MCF 10A (cell line): ENCODE measurements at regions of chr6 and their contacts with region 1.

Region 1: DNA sequence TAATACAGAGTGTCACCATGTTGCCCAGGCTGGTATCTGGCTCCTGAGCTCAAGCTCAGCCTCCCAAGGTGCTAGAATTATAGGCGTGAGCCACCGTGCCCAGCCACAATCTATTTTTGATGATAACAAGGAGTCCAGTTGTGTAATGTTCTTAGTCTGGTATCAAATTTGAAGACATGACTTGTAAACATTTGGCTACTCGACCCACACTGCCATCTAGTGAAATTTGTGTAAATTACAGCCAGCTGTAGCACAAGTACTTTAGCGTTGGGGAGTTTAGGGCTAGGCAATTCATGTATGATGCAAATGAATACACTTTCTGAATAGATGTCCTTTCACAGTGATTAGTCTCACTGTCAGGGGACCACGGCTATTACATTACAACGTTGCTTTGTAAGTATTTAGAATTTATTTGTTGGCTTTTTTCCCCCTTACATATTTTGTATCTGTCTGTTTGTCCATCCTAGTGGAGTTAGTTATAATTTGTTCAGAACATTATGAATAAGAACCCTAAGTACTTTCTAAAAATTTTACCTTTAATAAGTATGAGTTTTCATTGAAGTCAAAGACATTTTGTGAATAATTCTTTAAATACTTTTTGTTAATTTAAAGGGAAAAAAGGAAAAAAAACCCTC is 139.7 kb downstream of the PRDM13 start:
- DNase-seq: peak; percentile 73
- H3K4me3 Mint-ChIP-seq: no peak overlapping the region
- H3K27ac Mint-ChIP-seq: no peak overlapping the region
- H3K4me1 Mint-ChIP-seq: no peaks in the 10 kb centered on the region
- H3K27me3 Mint-ChIP-seq: peaks cover 75% of the 10 kb centered on the region
- CTCF ChIP-seq: peak; percentile 80

Region 2: DNA sequence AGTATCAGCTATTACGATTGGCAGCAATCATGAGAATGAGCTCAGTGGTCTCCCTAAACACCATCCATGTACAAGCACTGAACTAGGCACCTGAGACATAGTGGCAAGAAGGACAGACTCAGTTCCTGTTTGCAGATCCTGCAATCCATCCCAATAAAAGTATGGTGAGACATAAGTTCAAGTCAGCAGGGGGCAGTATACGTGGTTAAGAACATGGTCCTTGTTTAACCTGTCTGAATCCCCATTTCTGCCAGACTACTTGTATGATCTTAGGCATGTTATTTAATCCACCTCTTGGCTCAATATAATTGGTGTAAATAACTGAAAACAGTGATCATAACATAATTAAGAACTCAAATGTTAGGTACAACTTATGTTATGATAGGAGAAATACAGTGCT is 288.1 kb before region 1 on chr6:
- CTCF ChIA-PET with region 1: interaction called, 10 read pairs
- POLR2A ChIA-PET with region 1: interaction called, 3 read pairs
- intact Hi-C with region 1: no loop called
- DNase-seq: peak; percentile 38
- H3K4me3 Mint-ChIP-seq: no peak overlapping the region
- H3K27ac Mint-ChIP-seq: no peak overlapping the region
- H3K4me1 Mint-ChIP-seq: no peaks in the 10 kb centered on the region
- H3K27me3 Mint-ChIP-seq: no peaks in the 10 kb centered on the region
- CTCF ChIP-seq: no peak

Region 3: DNA sequence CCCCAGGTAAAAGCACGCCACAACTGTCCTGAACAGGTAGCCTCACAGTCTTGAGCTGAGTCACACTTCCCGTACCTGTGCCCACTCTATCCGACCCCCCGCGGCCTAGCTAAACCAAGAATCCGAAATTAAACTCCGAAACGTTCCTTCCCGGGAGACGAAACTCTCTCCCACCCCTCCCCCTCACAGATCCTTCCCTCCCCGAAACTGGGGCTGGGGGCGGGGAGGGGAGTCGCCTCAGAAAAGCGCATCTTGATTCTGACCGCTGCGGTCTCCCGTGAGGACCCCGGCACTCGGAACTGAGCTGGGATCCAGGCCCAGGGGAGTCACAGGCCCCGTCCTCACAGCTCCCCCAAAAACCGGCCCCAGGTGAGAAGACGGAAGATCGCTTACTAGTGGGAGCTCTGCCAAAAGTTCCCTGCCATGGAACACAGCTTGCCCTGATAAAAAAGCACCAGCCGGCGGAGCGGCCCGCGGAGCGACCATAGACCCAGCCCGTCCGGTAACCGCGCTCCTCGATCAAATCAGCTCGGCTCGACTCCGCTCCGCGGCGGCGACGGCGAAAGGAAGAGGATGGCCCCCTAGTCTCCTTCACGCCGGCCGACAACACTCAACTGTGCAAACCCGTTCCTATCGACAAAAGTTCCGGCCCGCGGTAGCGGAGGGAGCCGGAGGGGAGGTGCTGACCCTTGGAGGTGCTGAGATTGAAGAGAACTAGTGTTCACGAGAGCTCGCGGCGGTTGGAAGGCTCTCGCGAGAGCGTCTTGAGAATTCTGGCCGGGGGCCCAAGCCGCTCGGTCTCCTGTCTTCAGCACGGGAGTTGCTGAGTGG is 178.1 kb before region 1 on chr6 and contains the start of gene CCNC:
- CTCF ChIA-PET with region 1: interaction called, 11 read pairs
- POLR2A ChIA-PET with region 1: interaction called, 6 read pairs
- intact Hi-C with region 1: no loop called
- DNase-seq: peak; percentile 97
- H3K4me3 Mint-ChIP-seq: peak within 1 kb of the TSS; percentile 100
- H3K27ac Mint-ChIP-seq: peak within 1 kb of the TSS; percentile 100
- H3K4me1 Mint-ChIP-seq: peaks cover 23% of the 10 kb centered on the region
- H3K27me3 Mint-ChIP-seq: no peaks in the 10 kb centered on the region
- CTCF ChIP-seq: no peak
- total RNA-seq, gene CCNC: 54.0 and 76.5 TPM in 2 replicates

Region 4: DNA sequence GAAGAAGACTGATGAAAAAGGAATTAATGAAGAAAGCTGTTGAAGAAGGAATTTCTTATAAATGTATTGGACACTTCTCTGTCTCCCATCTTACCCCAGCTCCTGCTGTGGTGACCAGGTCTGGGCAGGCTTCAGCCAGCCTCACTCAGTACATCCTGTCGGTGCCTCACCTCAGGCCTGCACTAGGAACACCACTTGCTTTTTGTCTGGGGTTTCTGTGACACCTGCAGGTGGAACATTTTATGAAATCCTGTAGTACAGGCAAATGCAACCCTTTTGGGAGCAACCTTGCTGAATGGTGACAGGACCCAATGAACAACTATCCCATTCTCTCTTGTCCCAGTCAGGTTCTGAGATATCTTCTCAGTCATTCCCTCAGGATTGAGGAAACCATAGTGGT is 10.1 kb before region 1 on chr6:
- CTCF ChIA-PET with region 1: interaction called, 14 read pairs
- POLR2A ChIA-PET with region 1: interaction called, 3 read pairs
- intact Hi-C with region 1: no loop called
- DNase-seq: peak; percentile 46
- H3K4me3 Mint-ChIP-seq: no peak overlapping the region
- H3K27ac Mint-ChIP-seq: no peak overlapping the region
- H3K4me1 Mint-ChIP-seq: no peaks in the 10 kb centered on the region
- H3K27me3 Mint-ChIP-seq: peaks cover 86% of the 10 kb centered on the region
- CTCF ChIP-seq: peak; percentile 14

Region 5: DNA sequence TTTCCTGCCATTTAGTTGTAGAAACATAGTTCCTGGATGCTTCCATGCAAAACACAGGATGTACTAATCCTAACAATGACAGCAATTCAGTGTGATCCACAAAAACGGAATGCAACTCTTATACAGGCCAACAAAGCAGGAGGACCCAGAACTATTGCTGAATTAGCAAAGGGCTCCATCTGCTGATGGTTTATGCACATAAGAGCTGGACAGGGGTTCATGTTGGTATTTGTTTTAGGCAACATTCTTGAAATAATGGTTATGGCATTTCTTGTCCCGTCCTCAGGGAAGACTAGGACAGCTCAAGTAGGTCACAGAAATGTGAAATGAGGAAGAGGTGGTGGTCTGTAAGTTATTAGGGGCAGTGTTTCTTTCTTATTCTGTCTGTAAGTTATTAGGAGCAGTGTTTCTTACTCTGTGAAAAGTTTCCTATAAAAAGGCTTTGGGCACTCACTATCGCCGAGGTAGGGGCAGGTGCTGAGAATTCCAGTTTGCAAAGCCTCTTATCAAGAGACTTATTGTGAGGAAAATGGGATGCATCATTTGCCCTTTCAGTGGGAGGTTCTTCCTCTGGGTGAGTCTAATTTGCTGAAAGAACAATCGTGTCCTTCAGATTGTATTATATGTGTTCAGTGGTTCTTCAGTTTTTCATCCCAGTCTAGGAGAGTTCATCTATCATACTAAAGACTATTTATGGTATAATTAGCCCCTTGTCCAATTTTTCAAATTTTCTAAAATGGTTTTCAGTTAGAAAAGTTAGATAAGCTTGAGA is 76.5 kb after region 1 on chr6:
- CTCF ChIA-PET with region 1: interaction called, 27 read pairs
- POLR2A ChIA-PET with region 1: no interaction called
- intact Hi-C with region 1: no loop called
- DNase-seq: peak; percentile 81
- H3K4me3 Mint-ChIP-seq: peak overlapping the region; percentile 73
- H3K27ac Mint-ChIP-seq: no peak overlapping the region
- H3K4me1 Mint-ChIP-seq: peaks cover 11% of the 10 kb centered on the region
- H3K27me3 Mint-ChIP-seq: no peaks in the 10 kb centered on the region
- CTCF ChIP-seq: peak; percentile 66